Heart right ventricle (tissue), 16 donors: ENCODE measurements at regions of chr2 and their contacts with region 1.

Region 1: GRCh38 chr2:47906157-47907038 is at the start of gene FBXO11:
- DNase-seq: peak; percentile 94 to 98
- ATAC-seq: peak; percentile 94 to 98 (median 96)
- H3K4me3 ChIP-seq: peak within 1 kb of the TSS; percentile 76 to 95 (median 90)
- H3K27ac ChIP-seq: peak within 1 kb of the TSS; percentile 93 to 100 (median 99)
- H3K4me1 ChIP-seq: peaks cover 0 to 35% (median 28%) of the 10 kb centered on the region in 9 donors
- H3K27me3 ChIP-seq: no peaks in the 10 kb centered on the region
- CTCF ChIP-seq: peak; percentile 20 to 79 (median 61)
- total RNA-seq, gene FBXO11: 33.3 to 48.2 (median 37.6) TPM

Region 2: GRCh38 chr2:47842846-47843245 is 63.6 kb before region 1 on chr2:
- intact Hi-C with region 1: loop called in 1 of 10 experiments (anchors 10 kb)
- DNase-seq: no peak
- ATAC-seq: no peak
- H3K4me3 ChIP-seq: no peak overlapping the region
- H3K27ac ChIP-seq: no peak overlapping the region
- H3K4me1 ChIP-seq: peaks cover 0 to 45% (median 22%) of the 10 kb centered on the region in 9 donors
- H3K27me3 ChIP-seq: no peaks in the 10 kb centered on the region
- CTCF ChIP-seq: no peak

Region 3: DNA sequence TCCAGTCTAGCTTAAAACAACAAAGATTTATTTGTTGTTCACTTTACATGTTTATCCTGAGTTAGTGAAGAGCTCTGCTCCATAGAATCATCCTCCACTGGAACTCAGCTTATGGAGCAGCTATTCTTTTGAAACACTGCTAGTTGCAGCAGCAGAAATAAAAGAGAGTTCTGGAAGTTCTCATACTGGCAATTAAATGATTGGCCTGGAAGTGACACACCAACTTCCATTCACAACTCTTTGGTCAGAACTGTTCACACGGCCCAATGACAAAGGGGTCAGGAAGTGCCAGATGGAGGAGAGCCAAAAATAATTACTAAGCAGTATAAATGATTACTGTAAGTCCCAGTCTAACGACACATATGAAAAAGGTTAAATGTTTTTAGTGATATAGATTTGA is 39.2 kb before region 1 on chr2:
- intact Hi-C with region 1: loop called in 8 of 10 experiments (anchors 5 kb)
- DNase-seq: peak in 1 of 2 donors; percentile 75
- ATAC-seq: peak; percentile 89 to 96 (median 94)
- H3K4me3 ChIP-seq: no peak overlapping the region
- H3K27ac ChIP-seq: peak overlapping the region in 8 of 10 donors; percentile 34 to 76 (median 54)
- H3K4me1 ChIP-seq: peaks cover 3 to 81% (median 66%) of the 10 kb centered on the region in 9 donors
- H3K27me3 ChIP-seq: no peaks in the 10 kb centered on the region
- CTCF ChIP-seq: no peak

Region 4: DNA sequence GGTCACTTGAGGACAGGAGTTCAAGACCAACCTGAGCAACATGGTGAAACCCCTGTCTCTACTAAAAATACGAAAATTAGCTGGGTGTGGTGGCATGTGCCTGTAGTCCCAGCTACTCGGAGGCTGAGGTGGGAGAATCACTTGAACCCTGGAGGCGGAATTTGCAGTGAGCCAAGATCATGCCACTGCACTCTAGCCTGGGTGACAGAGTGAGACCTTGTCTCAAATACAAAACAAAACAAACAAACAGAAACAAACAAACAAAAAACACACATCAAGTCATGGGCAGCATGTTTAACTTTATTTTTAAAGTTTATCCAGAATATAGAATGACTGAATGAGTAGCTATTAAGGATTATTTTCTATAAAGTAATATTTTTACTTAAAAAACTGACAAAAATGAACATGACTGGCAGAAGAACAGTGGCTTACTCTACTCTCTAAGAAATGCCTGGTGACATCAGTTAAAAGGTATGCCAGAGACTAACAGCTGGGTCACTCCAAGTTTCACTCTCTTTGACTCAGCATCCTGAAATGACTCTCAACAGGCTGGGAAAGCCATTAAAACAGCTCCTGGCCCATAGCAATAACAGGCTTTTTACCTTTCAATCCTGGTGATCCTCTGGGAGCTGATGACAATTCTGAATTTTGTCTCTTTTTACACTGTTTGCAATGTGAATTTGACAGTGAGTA is 342.0 kb after region 1 on chr2:
- intact Hi-C with region 1: loop called in 1 of 10 experiments (anchors 10 kb)
- DNase-seq: peak in 1 of 2 donors; percentile 56
- ATAC-seq: peak; percentile 76 to 98 (median 96)
- H3K4me3 ChIP-seq: peak overlapping the region in 2 of 10 donors; percentile 6 to 13
- H3K27ac ChIP-seq: peak overlapping the region in 9 of 10 donors; percentile 33 to 90 (median 75)
- H3K4me1 ChIP-seq: peaks cover 8 to 46% (median 28%) of the 10 kb centered on the region in 9 donors
- H3K27me3 ChIP-seq: no peaks in the 10 kb centered on the region
- CTCF ChIP-seq: no peak

Region 5: GRCh38 chr2:48433682-48434081 is 527.3 kb after region 1 on chr2:
- intact Hi-C with region 1: loop called in 2 of 10 experiments (anchors 10 kb)
- DNase-seq: no peak
- ATAC-seq: peak in 7 of 8 donors; percentile 64 to 87 (median 74)
- H3K4me3 ChIP-seq: no peak overlapping the region
- H3K27ac ChIP-seq: peak overlapping the region in 2 of 10 donors; percentile 40 to 62
- H3K4me1 ChIP-seq: peaks cover 0 to 29% (median 0%) of the 10 kb centered on the region in 9 donors
- H3K27me3 ChIP-seq: no peaks in the 10 kb centered on the region
- CTCF ChIP-seq: peak in 1 of 9 donors; percentile 9